ENCODE measurements at regions of chr19 and their contacts with region 1.

Region 1: DNA sequence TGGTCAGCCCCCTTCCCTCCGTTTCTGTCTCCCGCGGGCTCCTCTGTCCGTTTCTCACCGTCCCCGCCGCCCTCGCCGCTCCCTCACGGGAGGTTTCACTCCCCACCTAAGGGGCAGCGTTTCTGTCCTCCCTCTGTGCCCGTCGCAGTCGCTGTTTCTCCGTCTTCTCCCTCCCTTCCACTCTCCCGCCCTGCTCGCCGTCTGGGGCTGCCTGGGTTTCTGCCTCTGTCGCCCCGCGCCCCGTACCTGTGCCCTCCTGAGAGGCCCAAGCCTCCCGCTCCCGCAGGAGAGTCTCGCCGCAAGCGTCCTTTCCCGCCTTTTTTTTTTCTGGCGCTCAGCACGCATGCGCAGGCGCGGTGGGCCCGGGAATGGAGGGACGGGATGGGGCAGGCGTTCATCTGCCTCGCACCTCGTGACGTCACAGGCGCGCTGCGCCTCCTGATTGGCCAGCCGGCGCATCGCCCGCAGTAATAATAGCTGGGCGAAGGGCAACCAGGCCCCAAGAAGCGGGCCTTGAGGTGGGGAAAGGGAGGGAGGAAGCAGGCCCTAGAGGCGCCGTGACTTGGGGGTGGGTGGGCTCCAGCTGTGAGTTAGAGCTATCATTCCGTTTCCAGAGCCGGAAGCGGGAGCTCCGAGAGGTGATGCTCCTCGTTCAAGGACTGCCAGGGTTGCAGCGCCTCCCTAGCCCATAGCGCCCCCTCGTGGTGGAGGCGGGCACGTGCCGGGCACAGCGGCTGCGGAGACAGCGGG is 15.4 kb downstream of the SSC5D start:
- DNase-seq: peak; percentile 92
- H3K4me3 Mint-ChIP-seq: peak overlapping the region; percentile 70
- H3K27ac Mint-ChIP-seq: peak overlapping the region; percentile 79
- H3K4me1 Mint-ChIP-seq: peaks cover 24% of the 10 kb centered on the region
- H3K27me3 Mint-ChIP-seq: peaks cover 31% of the 10 kb centered on the region

Region 2: DNA sequence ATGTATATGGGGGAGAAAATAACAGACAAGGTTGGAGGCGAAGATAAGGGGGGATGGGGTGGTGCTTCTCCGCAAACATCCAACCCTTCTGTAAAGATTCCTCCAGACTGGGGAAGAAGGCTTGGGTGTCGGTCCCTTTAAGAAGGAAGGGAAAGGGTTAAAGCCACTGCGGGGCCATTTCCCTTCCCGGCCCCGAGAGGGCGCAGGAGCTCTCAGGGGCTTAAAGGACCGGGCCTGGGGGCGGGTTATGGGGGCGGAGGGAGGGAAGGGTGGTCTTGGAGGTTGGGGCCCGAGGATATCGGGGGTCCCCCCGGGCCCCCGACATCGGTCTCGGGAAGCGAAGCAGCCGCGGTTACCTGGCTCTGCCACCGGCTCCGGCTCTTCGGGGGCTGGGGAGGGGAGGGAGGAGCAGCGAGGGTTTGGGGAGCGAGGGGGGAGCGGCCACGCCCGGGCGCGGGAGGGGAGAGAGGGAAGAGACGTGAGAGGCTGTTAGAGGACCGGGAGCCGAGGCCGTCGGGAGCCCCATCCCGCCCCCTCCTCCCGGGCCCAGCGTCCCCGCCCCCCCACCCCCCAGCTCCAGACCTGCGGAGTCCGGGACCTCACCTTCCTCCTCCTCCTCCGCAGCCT is 357.5 kb before region 1 on chr19:
- CTCF ChIA-PET with region 1: interaction called, 27 read pairs
- DNase-seq: peak; percentile 43
- H3K4me3 Mint-ChIP-seq: no peak overlapping the region
- H3K27ac Mint-ChIP-seq: no peak overlapping the region
- H3K4me1 Mint-ChIP-seq: peaks cover 9% of the 10 kb centered on the region
- H3K27me3 Mint-ChIP-seq: peaks cover 93% of the 10 kb centered on the region

Region 3: DNA sequence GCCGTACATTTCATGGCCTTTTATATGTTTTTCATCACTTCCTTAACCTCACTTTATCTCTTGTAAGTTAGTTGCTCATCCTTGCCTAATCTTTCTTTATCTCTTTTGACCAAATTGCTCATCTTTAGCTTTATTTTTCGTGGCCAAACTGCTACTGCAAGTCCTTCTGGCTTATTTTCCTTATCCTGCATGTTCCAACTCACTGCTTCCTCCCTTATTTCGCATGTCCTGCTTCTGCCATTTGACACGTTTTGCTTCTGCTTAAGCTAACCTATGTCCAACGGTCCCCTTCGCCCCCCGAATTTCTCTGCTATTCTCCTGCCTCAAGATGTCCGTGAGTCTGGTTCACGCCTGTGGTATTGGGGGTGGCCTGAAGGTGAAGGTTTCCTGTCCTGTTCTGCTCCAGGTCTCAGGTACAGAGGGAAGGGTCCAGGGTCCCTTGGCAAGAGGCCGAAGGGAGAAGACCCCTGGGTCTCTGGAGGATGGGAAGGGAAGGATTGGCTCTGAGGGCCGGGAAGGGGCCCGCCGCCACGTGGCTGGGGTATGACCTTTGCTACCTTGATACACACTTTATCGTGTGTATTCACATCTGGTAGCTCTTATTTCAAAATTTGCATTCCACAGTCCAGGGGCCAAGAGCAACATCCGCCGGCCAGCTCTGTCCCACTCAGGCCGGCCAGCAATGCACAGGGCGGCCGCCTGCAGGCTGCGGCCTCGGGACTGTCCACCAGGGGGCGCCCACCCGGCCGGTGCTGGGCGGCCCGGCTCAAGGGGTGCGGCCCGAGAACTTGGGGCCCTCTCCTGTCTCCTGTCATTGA is 36.2 kb before region 1 on chr19:
- CTCF ChIA-PET with region 1: interaction called, 53 read pairs
- DNase-seq: peak; percentile 76
- H3K4me3 Mint-ChIP-seq: no peak overlapping the region
- H3K27ac Mint-ChIP-seq: no peak overlapping the region
- H3K4me1 Mint-ChIP-seq: peaks cover 6% of the 10 kb centered on the region
- H3K27me3 Mint-ChIP-seq: peaks cover 35% of the 10 kb centered on the region

Region 4: GRCh38 chr19:55476100-55476775 is 27.4 kb before region 1 on chr19 and contains the start of gene ZNF628:
- CTCF ChIA-PET with region 1: interaction called, 20 read pairs
- DNase-seq: peak; percentile 99
- H3K4me3 Mint-ChIP-seq: peak within 1 kb of the TSS; percentile 84
- H3K27ac Mint-ChIP-seq: peak within 1 kb of the TSS; percentile 92
- H3K4me1 Mint-ChIP-seq: peaks cover 34% of the 10 kb centered on the region
- H3K27me3 Mint-ChIP-seq: peaks cover 4% of the 10 kb centered on the region

Region 5: DNA sequence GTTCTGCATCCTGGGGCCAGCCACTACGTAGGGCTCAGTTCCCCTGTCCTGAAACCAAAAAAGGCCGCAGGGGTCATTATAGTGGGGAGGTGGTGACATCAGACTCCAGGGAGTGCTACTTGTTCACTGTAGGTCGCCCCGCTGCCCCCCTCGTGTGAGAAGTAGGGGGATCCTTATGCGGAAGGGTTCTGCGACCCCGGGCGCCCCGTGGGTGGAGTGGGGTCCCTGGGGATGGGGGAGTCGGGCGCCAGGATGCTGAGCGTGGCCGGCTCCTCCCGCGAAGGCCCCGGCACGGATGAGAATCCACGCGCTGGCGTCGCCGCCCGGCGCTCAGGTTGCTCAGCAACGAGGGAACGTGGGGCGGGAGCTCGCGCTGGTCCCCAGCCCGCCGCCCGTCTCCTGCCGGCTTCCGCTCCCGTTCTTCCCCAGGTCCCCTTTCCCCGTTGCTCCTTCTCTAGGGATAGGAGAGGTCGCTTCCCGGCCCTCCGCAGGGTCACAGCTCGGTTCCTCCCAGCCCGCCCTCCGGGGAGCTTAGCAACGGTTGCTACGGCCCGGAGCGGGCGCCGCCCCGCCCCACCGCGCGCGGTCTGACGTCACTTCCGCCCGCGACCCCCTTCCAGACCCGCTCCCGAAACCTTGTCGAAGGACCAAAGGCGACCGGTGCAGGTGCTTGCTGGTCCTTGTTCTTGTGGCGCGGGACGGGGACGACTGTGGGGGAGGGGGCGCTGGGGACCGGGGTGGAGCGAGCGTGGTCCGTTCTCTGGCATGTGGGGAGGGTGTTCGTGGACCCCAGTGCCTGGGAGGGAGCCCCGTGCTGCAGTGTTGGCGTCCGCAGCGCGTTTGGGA is 18.9 kb before region 1 on chr19 and contains the start of gene NAT14:
- CTCF ChIA-PET with region 1: interaction called, 23 read pairs
- DNase-seq: peak; percentile 75
- H3K4me3 Mint-ChIP-seq: peak within 1 kb of the TSS; percentile 73
- H3K27ac Mint-ChIP-seq: peak within 1 kb of the TSS; percentile 24
- H3K4me1 Mint-ChIP-seq: peaks cover 11% of the 10 kb centered on the region
- H3K27me3 Mint-ChIP-seq: peaks cover 26% of the 10 kb centered on the region

Region 6: DNA sequence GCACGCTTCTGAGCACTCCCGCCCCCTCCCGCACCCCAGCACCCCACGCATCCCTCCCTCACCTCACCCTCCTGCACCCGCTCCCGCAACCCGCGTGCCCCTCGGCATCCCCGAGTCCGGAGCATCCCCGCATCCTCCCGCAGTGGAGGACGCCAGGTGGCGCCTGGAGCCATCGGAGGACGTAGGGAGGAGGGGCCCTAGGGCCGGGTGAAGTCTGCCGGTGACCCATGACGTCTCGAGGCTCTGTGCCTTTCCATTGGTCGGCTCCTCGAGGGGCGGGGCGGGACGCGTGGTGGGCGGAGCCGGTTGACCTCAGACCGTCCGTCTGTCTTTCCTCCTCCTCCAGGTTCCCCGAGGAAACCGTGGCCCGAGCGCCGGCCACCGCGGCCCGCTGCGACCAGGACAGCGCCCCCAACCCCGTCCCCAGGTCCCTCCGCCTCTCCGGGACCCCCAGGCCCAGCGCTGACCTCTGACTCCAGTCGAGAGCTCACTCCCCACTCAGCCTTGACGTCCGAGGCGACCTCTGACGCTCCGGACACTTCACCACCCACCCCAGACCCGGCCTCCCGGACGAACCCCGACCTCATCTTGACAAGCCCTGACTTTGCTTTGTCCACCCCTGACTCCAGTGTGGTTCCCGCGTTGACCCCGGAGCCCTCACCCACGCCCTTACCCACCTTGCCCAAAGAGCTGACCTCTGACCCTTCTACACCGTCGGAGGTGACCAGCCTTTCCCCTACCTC is 13.4 kb after region 1 on chr19:
- CTCF ChIA-PET with region 1: interaction called, 15 read pairs
- DNase-seq: peak; percentile 92
- H3K4me3 Mint-ChIP-seq: peak overlapping the region; percentile 63
- H3K27ac Mint-ChIP-seq: no peak overlapping the region
- H3K4me1 Mint-ChIP-seq: peaks cover 3% of the 10 kb centered on the region
- H3K27me3 Mint-ChIP-seq: peaks cover 17% of the 10 kb centered on the region

Measured in activated naive CD4-positive, alpha-beta T cell treated with anti-CD3 and anti-CD28 coated beads, Interleukin-2, amount 10 ng/mL, durations not matched to agents 7 days and 5 days (primary cell).